Natural killer cell (primary cell): ENCODE measurements at regions of chr9 and their contacts with region 1.

Region 1: GRCh38 chr9:124415102-124415851 is at the start of gene PSMB7:
- DNase-seq: peak; percentile 94 to 99
- ATAC-seq: peak; percentile 96 to 99 (median 96)
- H3K4me3 ChIP-seq: peak within 1 kb of the TSS; percentile 83
- H3K4me3 Mint-ChIP-seq: peak within 1 kb of the TSS; percentile 96
- H3K27ac ChIP-seq: peak within 1 kb of the TSS; percentile 64
- H3K27ac Mint-ChIP-seq: peak within 1 kb of the TSS; percentile 86 to 93
- H3K4me1 ChIP-seq: peaks cover 22% of the 10 kb centered on the region
- H3K4me1 Mint-ChIP-seq: peaks cover 25 to 27% of the 10 kb centered on the region in 2 donors
- H3K27me3 ChIP-seq: no peaks in the 10 kb centered on the region
- H3K27me3 Mint-ChIP-seq: no peaks in the 10 kb centered on the region
- CTCF ChIP-seq: peak; percentile 85
- total RNA-seq, gene PSMB7: 75.6 to 75.9 (median 75.8) TPM

Region 2: DNA sequence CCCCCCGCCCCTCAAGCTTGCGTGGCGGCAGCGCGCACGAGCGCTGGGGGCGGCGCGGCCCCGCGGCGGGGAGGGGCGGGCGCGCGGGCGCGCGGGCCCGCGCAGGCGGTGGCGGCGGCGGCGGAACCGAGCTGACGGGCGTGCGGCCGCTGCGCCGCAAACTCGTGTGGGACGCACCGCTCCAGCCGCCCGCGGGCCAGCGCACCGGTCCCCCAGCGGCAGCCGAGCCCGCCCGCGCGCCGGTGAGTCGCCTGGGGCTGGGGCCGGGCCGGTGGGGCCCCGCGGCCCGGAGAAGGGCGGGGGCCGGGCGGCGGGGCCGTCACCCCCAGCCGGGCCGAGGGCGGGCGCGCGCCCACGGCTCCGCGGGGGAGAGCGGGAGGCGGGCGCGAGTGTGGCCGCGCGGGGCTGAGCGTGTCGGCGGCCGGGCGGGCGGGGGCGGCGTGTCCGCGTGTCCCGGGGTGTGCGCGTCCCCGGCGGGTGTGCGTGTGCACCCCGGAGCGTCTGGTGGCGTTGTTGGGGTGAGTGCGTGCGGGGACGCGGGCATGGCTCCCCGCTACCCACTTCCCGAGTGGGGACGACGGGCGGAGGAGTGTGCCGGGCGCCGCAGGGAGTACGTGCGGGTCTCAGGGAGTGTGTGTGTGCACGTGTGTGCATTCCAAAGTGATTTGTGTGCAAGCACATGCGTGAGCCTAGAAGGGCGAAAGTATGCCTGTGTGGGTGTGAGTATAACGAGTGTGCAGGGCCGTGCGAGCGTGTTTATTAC is 157.3 kb before region 1 on chr9 and contains the start of gene NEK6:
- intact Hi-C with region 1: no loop called
- DNase-seq: peak; percentile 56 to 62
- ATAC-seq: peak; percentile 79 to 82 (median 80)
- H3K4me3 ChIP-seq: peak within 1 kb of the TSS; percentile 94
- H3K4me3 Mint-ChIP-seq: peak within 1 kb of the TSS; percentile 98
- H3K27ac ChIP-seq: peak within 1 kb of the TSS; percentile 43
- H3K27ac Mint-ChIP-seq: peak within 1 kb of the TSS; percentile 81 to 94
- H3K4me1 ChIP-seq: peaks cover 53% of the 10 kb centered on the region
- H3K4me1 Mint-ChIP-seq: peaks cover 44 to 65% of the 10 kb centered on the region in 2 donors
- H3K27me3 ChIP-seq: no peaks in the 10 kb centered on the region
- H3K27me3 Mint-ChIP-seq: no peaks in the 10 kb centered on the region
- CTCF ChIP-seq: no peak
- total RNA-seq, gene NEK6: 25.0 to 34.9 (median 33.0) TPM

Region 3: GRCh38 chr9:124940693-124941453 is 525.6 kb after region 1 on chr9 and contains the start of gene GOLGA1:
- intact Hi-C with region 1: loop called (anchors 5 kb)
- DNase-seq: peak; percentile 92 to 97
- ATAC-seq: peak; percentile 85 to 97 (median 88)
- H3K4me3 ChIP-seq: peak within 1 kb of the TSS; percentile 98
- H3K4me3 Mint-ChIP-seq: peak within 1 kb of the TSS; percentile 97
- H3K27ac ChIP-seq: peak within 1 kb of the TSS; percentile 98
- H3K27ac Mint-ChIP-seq: peak within 1 kb of the TSS; percentile 91 to 95
- H3K4me1 ChIP-seq: peaks cover 14% of the 10 kb centered on the region
- H3K4me1 Mint-ChIP-seq: peaks cover 22 to 24% of the 10 kb centered on the region in 2 donors
- H3K27me3 ChIP-seq: no peaks in the 10 kb centered on the region
- H3K27me3 Mint-ChIP-seq: no peaks in the 10 kb centered on the region
- CTCF ChIP-seq: no peak
- total RNA-seq, gene GOLGA1: 21.5 to 32.4 (median 27.0) TPM